ENCODE measurements at regions of chr10 and their contacts with region 1.

Region 1: DNA sequence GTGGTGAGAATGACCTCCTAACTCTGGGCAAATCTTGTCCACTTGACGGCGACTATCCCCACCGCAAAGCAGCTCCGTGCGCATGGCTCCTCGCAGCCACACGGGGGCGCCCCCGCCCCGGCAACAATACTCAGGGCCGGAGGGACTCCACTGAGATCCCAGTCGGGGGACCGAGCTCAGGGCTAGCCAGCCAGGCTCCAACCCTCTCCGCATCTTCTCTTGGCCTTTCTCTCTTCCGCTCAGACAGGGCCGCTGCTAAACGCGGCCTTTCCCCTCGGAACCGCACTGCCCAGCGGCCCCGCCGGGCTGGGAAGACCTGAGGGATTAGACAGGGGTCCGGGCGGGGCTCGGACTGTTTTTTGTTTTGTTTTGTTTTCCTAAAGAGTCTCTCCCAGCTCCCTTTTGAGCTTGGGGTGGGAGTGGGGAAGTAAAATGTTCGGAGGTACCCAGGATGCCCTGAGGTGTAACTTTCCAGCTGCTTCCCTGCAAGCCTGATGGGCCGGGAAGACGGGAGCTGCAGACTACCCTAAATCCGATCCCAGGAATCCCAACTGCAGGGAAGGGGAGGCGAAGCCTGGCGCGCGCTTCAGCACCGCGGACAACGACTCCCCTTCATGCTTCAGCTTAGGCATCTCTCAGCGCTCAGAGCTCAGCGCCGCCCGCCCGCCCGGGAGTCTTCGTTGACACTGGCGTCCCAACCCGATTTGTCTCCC is 2.7 kb downstream of the KCNIP2 start:
- DNase-seq: peak; percentile 85
- ATAC-seq: peak; percentile 65
- H3K4me3 Mint-ChIP-seq: peak overlapping the region; percentile 77
- H3K27ac Mint-ChIP-seq: no peak overlapping the region
- H3K4me1 Mint-ChIP-seq: peaks cover 45% of the 10 kb centered on the region
- H3K27me3 Mint-ChIP-seq: peaks cover 14% of the 10 kb centered on the region
- CTCF ChIP-seq: peak; percentile 97

Region 2: GRCh38 chr10:101818119-101818871 is 22.6 kb before region 1 on chr10 and contains the start of gene OGA:
- CTCF ChIA-PET with region 1: interaction called, 125 read pairs
- POLR2A ChIA-PET with region 1: interaction called, 27 read pairs
- intact Hi-C with region 1: no loop called
- DNase-seq: peak; percentile 99
- ATAC-seq: peak; percentile 90
- H3K4me3 Mint-ChIP-seq: peak within 1 kb of the TSS; percentile 88
- H3K27ac Mint-ChIP-seq: peak within 1 kb of the TSS; percentile 96
- H3K4me1 Mint-ChIP-seq: peaks cover 34% of the 10 kb centered on the region
- H3K27me3 Mint-ChIP-seq: no peaks in the 10 kb centered on the region
- CTCF ChIP-seq: no peak
- total RNA-seq, gene OGA: 125 to 130 TPM

Region 3: GRCh38 chr10:101867931-101868330 is 27.0 kb after region 1 on chr10:
- CTCF ChIA-PET with region 1: interaction called, 10 read pairs
- POLR2A ChIA-PET with region 1: no interaction called
- intact Hi-C with region 1: no loop called
- DNase-seq: no peak
- ATAC-seq: no peak
- H3K4me3 Mint-ChIP-seq: no peak overlapping the region
- H3K27ac Mint-ChIP-seq: no peak overlapping the region
- H3K4me1 Mint-ChIP-seq: no peaks in the 10 kb centered on the region
- H3K27me3 Mint-ChIP-seq: no peaks in the 10 kb centered on the region
- CTCF ChIP-seq: no peak

Region 4: GRCh38 chr10:101974091-101974971 is 133.4 kb after region 1 on chr10:
- CTCF ChIA-PET with region 1: interaction called, 22 read pairs
- POLR2A ChIA-PET with region 1: no interaction called
- intact Hi-C with region 1: no loop called
- DNase-seq: peak; percentile 2
- ATAC-seq: no peak
- H3K4me3 Mint-ChIP-seq: peak overlapping the region; percentile 44
- H3K27ac Mint-ChIP-seq: peak overlapping the region; percentile 70
- H3K4me1 Mint-ChIP-seq: peaks cover 23% of the 10 kb centered on the region
- H3K27me3 Mint-ChIP-seq: no peaks in the 10 kb centered on the region
- CTCF ChIP-seq: no peak

Region 5: GRCh38 chr10:102055647-102056419 is 214.9 kb after region 1 on chr10 and contains the start of gene ARMH3:
- CTCF ChIA-PET with region 1: interaction called, 14 read pairs
- POLR2A ChIA-PET with region 1: no interaction called
- intact Hi-C with region 1: no loop called
- DNase-seq: peak; percentile 96
- ATAC-seq: peak; percentile 98
- H3K4me3 Mint-ChIP-seq: peak within 1 kb of the TSS; percentile 90
- H3K27ac Mint-ChIP-seq: peak within 1 kb of the TSS; percentile 94
- H3K4me1 Mint-ChIP-seq: peaks cover 32% of the 10 kb centered on the region
- H3K27me3 Mint-ChIP-seq: no peaks in the 10 kb centered on the region
- CTCF ChIP-seq: no peak
- total RNA-seq, gene ARMH3: 16.2 to 18.4 TPM

Region 6: DNA sequence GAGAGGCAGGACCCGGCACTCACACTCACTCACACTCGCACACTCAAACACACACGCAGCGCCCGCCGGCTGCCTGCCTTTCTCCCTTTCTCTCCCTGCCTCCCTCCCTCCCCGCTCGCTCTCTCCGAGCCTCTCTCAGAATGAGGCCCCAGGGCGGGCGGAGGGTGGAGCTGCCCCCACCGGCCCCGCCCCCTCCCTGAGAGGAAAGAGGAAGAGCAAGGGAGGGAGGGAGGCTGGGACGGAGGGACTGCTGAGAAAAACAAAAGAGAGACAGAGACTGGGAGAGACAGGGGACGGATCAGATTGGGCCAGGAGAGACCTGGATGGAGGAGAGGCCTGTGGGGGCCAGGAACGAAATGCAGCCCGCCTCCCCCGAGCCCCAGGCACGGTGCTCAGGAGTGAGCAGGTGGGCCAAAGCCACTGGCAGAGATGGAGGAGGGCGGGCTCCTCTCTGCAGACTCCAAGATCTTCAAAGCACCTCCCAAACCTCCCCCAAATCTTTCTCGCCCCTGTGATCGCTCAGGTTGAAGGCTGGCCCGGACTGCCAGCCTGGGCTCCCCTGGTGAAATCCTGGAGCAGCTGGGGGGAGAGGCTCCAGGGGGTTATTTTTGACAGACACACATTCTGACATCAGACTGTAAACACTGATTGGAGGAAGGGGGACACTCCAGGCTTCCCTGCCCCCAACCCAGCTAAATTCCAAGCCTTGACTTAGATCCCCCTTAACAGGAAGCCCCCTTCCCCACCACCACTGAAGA is 274.1 kb after region 1 on chr10:
- CTCF ChIA-PET with region 1: interaction called, 10 read pairs
- POLR2A ChIA-PET with region 1: interaction called, 4 read pairs
- intact Hi-C with region 1: no loop called
- DNase-seq: peak; percentile 91
- ATAC-seq: peak; percentile 61
- H3K4me3 Mint-ChIP-seq: peak overlapping the region; percentile 84
- H3K27ac Mint-ChIP-seq: peak overlapping the region; percentile 100
- H3K4me1 Mint-ChIP-seq: peaks cover 50% of the 10 kb centered on the region
- H3K27me3 Mint-ChIP-seq: no peaks in the 10 kb centered on the region
- CTCF ChIP-seq: no peak

Measured in activated CD8-positive, alpha-beta T cell treated with anti-CD3 and anti-CD28 coated beads for 36 hours (primary cell).